Activated CD4-positive, alpha-beta memory T cell treated with anti-CD3 and anti-CD28 coated beads, Interleukin-2, amount 10 ng/mL, durations not matched to agents 7 days and 5 days (primary cell): ENCODE measurements at regions of chr10 and their contacts with region 1.

Region 1: GRCh38 chr10:69451209-69451783 is at the start of gene TSPAN15:
- DNase-seq: peak; percentile 84
- H3K4me3 Mint-ChIP-seq: peak within 1 kb of the TSS; percentile 85
- H3K27ac Mint-ChIP-seq: peak within 1 kb of the TSS; percentile 28
- H3K4me1 Mint-ChIP-seq: peaks cover 56% of the 10 kb centered on the region
- H3K27me3 Mint-ChIP-seq: peaks cover 10% of the 10 kb centered on the region
- total RNA-seq, gene TSPAN15: 9.0 to 9.1 TPM

Region 2: GRCh38 chr10:69303632-69304051 is 147.7 kb before region 1 on chr10:
- CTCF ChIA-PET with region 1: no interaction called
- POLR2A ChIA-PET with region 1: no interaction called
- DNase-seq: no peak
- H3K4me3 Mint-ChIP-seq: no peak overlapping the region
- H3K27ac Mint-ChIP-seq: no peak overlapping the region
- H3K4me1 Mint-ChIP-seq: no peaks in the 10 kb centered on the region
- H3K27me3 Mint-ChIP-seq: peaks cover 2% of the 10 kb centered on the region

Region 3: GRCh38 chr10:69464801-69465401 is 13.6 kb after region 1 on chr10:
- CTCF ChIA-PET with region 1: interaction called, 24 read pairs
- POLR2A ChIA-PET with region 1: interaction called, 8 read pairs
- DNase-seq: peak; percentile 37
- H3K4me3 Mint-ChIP-seq: peak overlapping the region; percentile 14
- H3K27ac Mint-ChIP-seq: peak overlapping the region; percentile 95
- H3K4me1 Mint-ChIP-seq: peaks cover 72% of the 10 kb centered on the region
- H3K27me3 Mint-ChIP-seq: no peaks in the 10 kb centered on the region

Region 4: GRCh38 chr10:69486922-69487666 is 35.8 kb after region 1 on chr10:
- CTCF ChIA-PET with region 1: no interaction called
- POLR2A ChIA-PET with region 1: no interaction called
- DNase-seq: no peak
- H3K4me3 Mint-ChIP-seq: no peak overlapping the region
- H3K27ac Mint-ChIP-seq: no peak overlapping the region
- H3K4me1 Mint-ChIP-seq: peaks cover 4% of the 10 kb centered on the region
- H3K27me3 Mint-ChIP-seq: no peaks in the 10 kb centered on the region